B cell (primary cell): ENCODE measurements at regions of chr21 and their contacts with region 1.

Region 1: GRCh38 chr21:32328595-32328994 is 29.9 kb downstream of the MRAP start:
- DNase-seq: no peak
- ATAC-seq: no peak
- H3K4me3 ChIP-seq: no peak overlapping the region
- H3K4me3 Mint-ChIP-seq: no peak overlapping the region
- H3K27ac ChIP-seq: no peak overlapping the region
- H3K27ac Mint-ChIP-seq: no peak overlapping the region
- H3K4me1 ChIP-seq: no peaks in the 10 kb centered on the region
- H3K4me1 Mint-ChIP-seq: peaks cover 4% of the 10 kb centered on the region
- H3K27me3 ChIP-seq: no peaks in the 10 kb centered on the region
- H3K27me3 Mint-ChIP-seq: no peaks in the 10 kb centered on the region
- CTCF ChIP-seq: no peak

Region 2: GRCh38 chr21:32347736-32348653 is 19.4 kb after region 1 on chr21:
- CTCF ChIA-PET with region 1: no interaction called
- POLR2A ChIA-PET with region 1: no interaction called
- intact Hi-C with region 1: loop called (anchors 1 kb)
- DNase-seq: no peak
- ATAC-seq: no peak
- H3K4me3 ChIP-seq: no peak overlapping the region
- H3K4me3 Mint-ChIP-seq: no peak overlapping the region
- H3K27ac ChIP-seq: no peak overlapping the region
- H3K27ac Mint-ChIP-seq: no peak overlapping the region
- H3K4me1 ChIP-seq: no peaks in the 10 kb centered on the region
- H3K4me1 Mint-ChIP-seq: peaks cover 5% of the 10 kb centered on the region
- H3K27me3 ChIP-seq: no peaks in the 10 kb centered on the region
- H3K27me3 Mint-ChIP-seq: no peaks in the 10 kb centered on the region
- CTCF ChIP-seq: no peak